ENCODE measurements at regions of chr5 and their contacts with region 1.

Region 1: GRCh38 chr5:5658226-5658625 is 235.7 kb downstream of the ICE1 start:
- DNase-seq: no peak
- H3K4me3 ChIP-seq: peak overlapping the region in 1 of 3 donors; percentile 40
- H3K27ac ChIP-seq: no peak overlapping the region
- H3K4me1 ChIP-seq: no peaks in the 10 kb centered on the region
- H3K27me3 ChIP-seq: no peaks in the 10 kb centered on the region
- CTCF ChIP-seq: no peak
- POLR2A ChIP-seq: no peak

Region 2: DNA sequence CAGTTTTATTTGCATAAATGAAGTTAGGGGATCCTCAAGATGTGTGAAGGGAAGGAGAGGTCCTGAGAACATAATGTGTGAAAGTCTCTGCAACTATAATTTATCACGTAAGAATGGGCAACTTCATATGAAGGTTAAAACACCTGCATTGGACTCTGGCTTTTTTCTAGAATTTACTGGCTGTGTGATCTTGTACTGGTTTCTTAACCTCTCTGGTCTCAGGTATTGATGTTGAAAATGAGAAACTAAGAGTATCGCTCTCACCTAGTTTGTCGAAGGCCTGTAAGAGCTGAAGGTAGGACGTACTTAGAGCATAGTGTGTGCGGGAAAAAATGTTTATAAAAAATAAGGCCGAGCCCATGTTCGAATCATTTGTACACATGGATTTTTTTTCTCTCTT is 44.7 kb after region 1 on chr5:
- intact Hi-C with region 1: loop called (anchors 2 kb)
- DNase-seq: no peak
- H3K4me3 ChIP-seq: no peak overlapping the region
- H3K27ac ChIP-seq: no peak overlapping the region
- H3K4me1 ChIP-seq: no peaks in the 10 kb centered on the region
- H3K27me3 ChIP-seq: no peaks in the 10 kb centered on the region
- CTCF ChIP-seq: no peak
- POLR2A ChIP-seq: no peak